Activated naive CD8-positive, alpha-beta T cell treated with anti-CD3 and anti-CD28 coated beads, Interleukin-2, amount 10 ng/mL, durations not matched to agents 7 days and 5 days (primary cell): ENCODE measurements at regions of chr9 and their contacts with region 1.

Region 1: GRCh38 chr9:127970401-127971313 is 10.1 kb downstream of the EEIG1 start:
- DNase-seq: peak; percentile 70
- ATAC-seq: peak; percentile 71
- H3K4me3 Mint-ChIP-seq: peak overlapping the region; percentile 92
- H3K27ac Mint-ChIP-seq: peak overlapping the region; percentile 100
- H3K4me1 Mint-ChIP-seq: peaks cover 90% of the 10 kb centered on the region
- H3K27me3 Mint-ChIP-seq: no peaks in the 10 kb centered on the region

Region 2: DNA sequence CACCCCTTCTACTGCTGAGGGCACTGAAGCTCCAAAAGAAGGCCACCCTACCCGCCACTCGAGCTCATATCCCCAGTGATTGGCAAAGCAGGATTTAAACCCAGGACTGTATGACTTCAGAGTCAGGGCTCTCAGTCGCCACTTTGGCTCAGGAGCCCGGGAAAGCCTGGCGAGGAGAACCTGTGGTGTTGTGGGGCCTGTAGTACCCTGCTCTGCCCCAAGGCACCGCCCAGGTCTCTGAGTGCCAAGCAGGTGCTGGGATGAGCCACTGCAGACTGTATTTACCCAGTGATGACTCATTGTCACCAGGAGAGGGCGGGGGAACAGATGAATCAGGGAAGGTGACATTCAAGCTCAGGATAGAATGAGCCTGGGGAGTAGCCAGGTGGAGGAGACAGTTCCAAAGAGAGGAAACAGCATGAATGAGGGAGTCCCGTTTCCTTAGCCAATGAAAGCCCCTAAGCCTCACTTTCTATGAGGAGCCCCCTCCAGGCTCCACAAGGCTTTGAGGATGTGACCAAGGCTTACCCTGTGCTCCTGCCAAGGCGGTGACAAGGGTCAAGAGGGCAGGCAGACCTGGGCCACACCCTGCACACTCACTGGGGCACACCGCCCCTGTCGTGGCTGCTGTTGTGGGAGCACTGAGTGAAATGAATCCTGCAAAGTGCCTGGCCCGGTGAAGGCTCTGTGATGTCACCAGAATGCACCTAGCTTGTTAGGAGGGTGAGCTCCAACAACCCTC is 15.2 kb before region 1 on chr9:
- POLR2A ChIA-PET with region 1: interaction called, 14 read pairs
- DNase-seq: no peak
- ATAC-seq: peak; percentile 89
- H3K4me3 Mint-ChIP-seq: peak overlapping the region; percentile 74
- H3K27ac Mint-ChIP-seq: peak overlapping the region; percentile 69
- H3K4me1 Mint-ChIP-seq: peaks cover 67% of the 10 kb centered on the region
- H3K27me3 Mint-ChIP-seq: no peaks in the 10 kb centered on the region